CD8-positive, alpha-beta T cell (primary cell): ENCODE measurements at regions of chr17 and their contacts with region 1.

Region 1: DNA sequence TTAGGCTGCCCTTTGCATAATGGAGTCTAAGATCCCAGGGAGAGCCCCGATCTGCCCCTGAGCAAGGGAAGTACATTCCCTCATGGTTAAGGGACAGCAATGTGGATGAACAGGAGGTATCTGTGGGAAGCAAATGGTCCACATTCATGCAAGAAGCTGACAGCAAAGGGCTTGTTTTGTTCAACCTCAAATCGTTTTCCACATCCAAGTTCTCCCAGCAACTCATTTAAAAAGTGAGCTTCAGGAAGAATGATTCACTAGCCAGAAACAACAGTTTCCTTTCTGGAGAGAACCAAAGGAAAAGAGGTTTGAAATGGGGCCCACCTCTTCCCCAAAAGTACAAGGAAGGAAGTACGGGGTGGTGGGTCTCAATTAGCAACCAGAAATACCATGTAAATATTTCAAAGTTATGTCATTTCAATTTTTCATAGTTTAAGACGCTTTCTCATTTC is 9.4 kb downstream of the HSPB9 start:
- DNase-seq: no peak
- ATAC-seq: no peak
- H3K4me3 ChIP-seq: no peak overlapping the region
- H3K4me3 Mint-ChIP-seq: no peak overlapping the region
- H3K27ac ChIP-seq: no peak overlapping the region
- H3K27ac Mint-ChIP-seq: no peak overlapping the region
- H3K4me1 ChIP-seq: peaks cover 36% of the 10 kb centered on the region
- H3K4me1 Mint-ChIP-seq: peaks cover 51% of the 10 kb centered on the region
- H3K27me3 ChIP-seq: no peaks in the 10 kb centered on the region
- H3K27me3 Mint-ChIP-seq: no peaks in the 10 kb centered on the region
- CTCF ChIP-seq: no peak

Region 2: DNA sequence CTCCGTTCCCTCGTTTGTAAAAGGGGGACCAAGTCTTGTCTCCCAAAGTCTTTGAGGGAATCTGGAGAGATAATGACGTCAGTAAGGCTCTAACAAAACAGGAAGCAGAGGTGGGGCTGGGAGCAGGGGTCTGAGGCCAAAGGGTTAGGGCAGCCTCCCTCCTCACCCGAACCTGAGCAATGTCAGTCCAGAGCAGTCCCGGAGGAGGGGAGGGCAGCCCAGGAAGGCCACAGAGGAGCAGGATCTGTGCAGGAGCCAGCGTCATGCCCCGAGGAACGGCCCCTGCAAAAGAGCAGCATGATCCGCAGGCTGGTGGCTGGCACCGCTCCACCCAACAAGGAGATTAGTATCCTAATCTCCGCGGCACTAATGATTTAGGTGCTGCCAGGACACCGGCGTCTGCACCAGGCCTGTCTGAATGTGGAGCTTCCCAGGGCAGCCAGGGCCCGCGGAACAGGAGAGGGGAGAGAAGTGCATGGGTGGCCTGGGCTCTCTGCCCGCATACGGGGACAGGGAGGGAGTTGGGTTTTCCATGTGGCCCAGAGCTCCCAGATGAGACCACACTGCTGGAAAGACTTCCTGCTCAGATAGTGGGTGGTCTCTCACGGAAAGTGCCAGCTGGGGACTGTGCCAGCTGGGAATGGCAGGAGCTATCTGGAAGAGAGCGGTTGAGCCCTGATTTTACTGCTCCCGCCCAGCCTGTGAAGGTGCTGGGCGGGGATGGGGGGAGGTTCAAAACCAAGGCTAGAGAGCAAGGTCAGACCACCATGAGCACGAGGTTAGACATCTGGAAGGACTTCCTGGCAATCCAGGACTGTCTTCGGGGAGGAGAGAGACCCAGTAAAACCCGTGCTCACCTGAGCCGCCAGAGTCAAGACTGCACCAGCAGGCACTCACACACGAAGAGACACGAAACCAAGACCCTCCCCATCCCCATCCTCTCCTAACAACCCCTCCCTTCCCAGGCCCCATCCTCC is 496.6 kb before region 1 on chr17:
- CTCF ChIA-PET with region 1: no interaction called
- POLR2A ChIA-PET with region 1: no interaction called
- intact Hi-C with region 1: no loop called
- DNase-seq: peak in 1 of 9 experiments; percentile 1
- ATAC-seq: no peak
- H3K4me3 ChIP-seq: no peak overlapping the region
- H3K4me3 Mint-ChIP-seq: no peak overlapping the region
- H3K27ac ChIP-seq: no peak overlapping the region
- H3K27ac Mint-ChIP-seq: no peak overlapping the region
- H3K4me1 ChIP-seq: no peaks in the 10 kb centered on the region
- H3K4me1 Mint-ChIP-seq: no peaks in the 10 kb centered on the region
- H3K27me3 ChIP-seq: peaks cover 0 to 4% of the 10 kb centered on the region in 2 experiments
- H3K27me3 Mint-ChIP-seq: no peaks in the 10 kb centered on the region
- CTCF ChIP-seq: no peak

Region 3: DNA sequence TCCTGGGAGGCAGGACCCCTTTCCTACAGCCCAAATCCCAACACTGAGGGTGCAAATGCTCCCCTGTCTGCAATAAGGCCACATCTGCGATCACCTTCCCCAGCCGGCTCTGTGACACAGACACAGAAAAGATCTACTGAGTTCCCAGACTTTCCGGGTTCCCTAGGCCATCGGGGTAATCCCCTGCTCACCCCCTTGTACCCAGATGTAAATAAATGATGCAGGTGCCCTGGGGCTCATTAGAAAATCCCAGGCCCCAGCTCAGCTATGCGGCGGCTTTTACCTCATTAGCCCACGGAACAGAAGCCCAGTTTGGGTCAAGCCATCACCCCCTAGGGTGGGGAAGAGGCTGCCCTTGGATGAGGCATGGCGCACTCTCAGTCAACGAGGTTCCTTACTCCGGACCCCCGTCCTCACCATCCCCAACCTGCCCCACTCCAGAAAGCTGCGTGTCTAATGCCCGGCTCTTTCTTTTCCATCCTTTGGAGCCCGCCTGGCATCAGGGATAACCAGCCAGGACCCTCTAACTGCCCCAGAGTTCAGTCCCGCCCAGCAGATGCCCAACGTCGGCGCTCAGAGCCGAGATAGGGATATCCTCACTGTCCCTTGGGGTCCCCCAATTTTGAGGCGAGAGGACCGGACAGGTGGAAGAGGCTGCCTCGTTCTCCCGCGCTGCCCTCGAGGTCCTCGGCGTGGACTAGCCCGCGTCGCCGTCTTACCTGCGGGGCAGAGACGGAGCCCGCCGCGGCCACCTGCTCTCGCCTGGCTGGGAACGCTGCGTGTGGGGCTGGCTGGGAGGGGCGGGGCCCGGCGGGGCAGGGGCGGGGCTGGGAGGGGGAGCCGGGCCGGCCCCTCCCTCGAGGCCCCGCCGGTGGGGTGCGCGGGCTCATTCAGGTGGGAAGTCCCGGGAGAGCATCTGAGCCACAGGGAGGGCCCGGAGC is 34.0 kb before region 1 on chr17 and contains the start of gene ZNF385C:
- CTCF ChIA-PET with region 1: no interaction called
- POLR2A ChIA-PET with region 1: no interaction called
- intact Hi-C with region 1: no loop called
- DNase-seq: peak in 8 of 9 experiments; percentile 24 to 75 (median 54)
- ATAC-seq: peak; percentile 87
- H3K4me3 ChIP-seq: peak within 1 kb of the TSS; percentile 25 to 47
- H3K4me3 Mint-ChIP-seq: peak within 1 kb of the TSS; percentile 58
- H3K27ac ChIP-seq: no peak within 1 kb of the TSS
- H3K27ac Mint-ChIP-seq: no peak within 1 kb of the TSS
- H3K4me1 ChIP-seq: peaks cover 9% of the 10 kb centered on the region
- H3K4me1 Mint-ChIP-seq: peaks cover 7% of the 10 kb centered on the region
- H3K27me3 ChIP-seq: peaks cover 0 to 4% of the 10 kb centered on the region in 2 experiments
- H3K27me3 Mint-ChIP-seq: peaks cover 12% of the 10 kb centered on the region
- CTCF ChIP-seq: no peak
- total RNA-seq, gene ZNF385C: 0.19 TPM in 1 of 2 experiments, not detected in the other

Region 4: DNA sequence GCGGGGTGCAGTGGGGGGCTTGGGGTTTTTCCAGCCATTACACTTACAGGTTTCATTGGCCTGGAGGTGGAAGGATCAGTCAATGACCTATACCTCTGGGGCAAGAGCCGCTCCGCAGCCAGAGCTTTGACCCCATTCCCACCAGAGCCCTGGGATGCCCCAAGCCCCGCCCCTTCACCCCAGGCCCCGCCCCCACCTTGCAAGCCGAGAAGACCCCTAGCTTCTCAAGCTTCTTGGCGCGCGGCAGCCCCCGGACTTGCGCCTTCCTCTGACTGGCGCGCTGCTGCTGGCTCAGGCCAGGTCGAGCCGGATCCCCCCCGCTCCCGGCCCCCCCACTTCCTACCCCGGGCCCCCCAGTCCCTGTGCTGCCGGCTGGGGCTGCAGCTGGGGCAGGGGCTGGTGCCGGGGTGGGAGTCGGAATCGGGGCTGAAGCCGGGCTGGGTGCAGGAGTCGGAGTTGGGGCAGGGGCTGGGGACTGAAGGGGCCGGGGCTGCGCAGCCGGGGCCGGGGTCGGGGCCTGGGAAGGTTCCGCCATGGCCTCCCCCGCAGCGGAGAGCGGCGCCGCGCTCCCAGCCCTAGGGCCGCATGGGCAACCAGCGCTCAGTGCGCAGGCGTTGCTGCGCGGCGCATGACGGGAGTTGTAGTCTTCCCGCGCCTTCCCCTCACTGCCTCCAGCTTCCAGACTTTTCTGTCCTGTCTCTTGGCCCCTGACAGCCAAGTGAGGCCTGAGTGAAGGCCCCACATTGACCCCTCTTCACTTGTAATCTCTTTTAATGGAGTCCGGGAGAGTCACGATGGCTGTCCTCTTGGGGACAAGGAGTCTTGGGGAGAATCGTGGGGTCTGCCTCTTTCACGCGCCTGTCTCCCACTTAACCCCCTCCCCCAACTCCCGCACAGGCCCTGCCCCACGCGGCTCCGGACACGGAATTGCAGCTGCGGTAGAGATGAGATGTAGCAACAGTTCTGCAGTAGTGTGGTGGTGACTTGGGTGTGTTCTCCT is 10.9 kb before region 1 on chr17 and contains the start of gene KAT2A:
- CTCF ChIA-PET with region 1: interaction called, 11 read pairs
- POLR2A ChIA-PET with region 1: interaction called, 4 read pairs
- intact Hi-C with region 1: no loop called
- DNase-seq: peak; percentile 52 to 89 (median 75)
- ATAC-seq: peak; percentile 88
- H3K4me3 ChIP-seq: peak within 1 kb of the TSS; percentile 38 to 65
- H3K4me3 Mint-ChIP-seq: peak within 1 kb of the TSS; percentile 76
- H3K27ac ChIP-seq: no peak within 1 kb of the TSS
- H3K27ac Mint-ChIP-seq: no peak within 1 kb of the TSS
- H3K4me1 ChIP-seq: peaks cover 13% of the 10 kb centered on the region
- H3K4me1 Mint-ChIP-seq: peaks cover 22% of the 10 kb centered on the region
- H3K27me3 ChIP-seq: no peaks in the 10 kb centered on the region
- H3K27me3 Mint-ChIP-seq: no peaks in the 10 kb centered on the region
- CTCF ChIP-seq: no peak
- total RNA-seq, gene KAT2A: 39.3 to 42.5 TPM

Region 5: GRCh38 chr17:42159796-42160519 is 28.0 kb after region 1 on chr17:
- CTCF ChIA-PET with region 1: no interaction called
- POLR2A ChIA-PET with region 1: no interaction called
- intact Hi-C with region 1: no loop called
- DNase-seq: no peak
- ATAC-seq: no peak
- H3K4me3 ChIP-seq: no peak overlapping the region
- H3K4me3 Mint-ChIP-seq: no peak overlapping the region
- H3K27ac ChIP-seq: no peak overlapping the region
- H3K27ac Mint-ChIP-seq: no peak overlapping the region
- H3K4me1 ChIP-seq: peaks cover 5% of the 10 kb centered on the region
- H3K4me1 Mint-ChIP-seq: peaks cover 7% of the 10 kb centered on the region
- H3K27me3 ChIP-seq: no peaks in the 10 kb centered on the region
- H3K27me3 Mint-ChIP-seq: no peaks in the 10 kb centered on the region
- CTCF ChIP-seq: no peak

Region 6: GRCh38 chr17:42190491-42191274 is 58.7 kb after region 1 on chr17:
- CTCF ChIA-PET with region 1: no interaction called
- POLR2A ChIA-PET with region 1: no interaction called
- intact Hi-C with region 1: no loop called
- DNase-seq: no peak
- ATAC-seq: no peak
- H3K4me3 ChIP-seq: no peak overlapping the region
- H3K4me3 Mint-ChIP-seq: no peak overlapping the region
- H3K27ac ChIP-seq: no peak overlapping the region
- H3K27ac Mint-ChIP-seq: no peak overlapping the region
- H3K4me1 ChIP-seq: peaks cover 22% of the 10 kb centered on the region
- H3K4me1 Mint-ChIP-seq: peaks cover 19% of the 10 kb centered on the region
- H3K27me3 ChIP-seq: no peaks in the 10 kb centered on the region
- H3K27me3 Mint-ChIP-seq: no peaks in the 10 kb centered on the region
- CTCF ChIP-seq: no peak